ENCODE measurements at regions of chr6 and their contacts with region 1.

Region 1: GRCh38 chr6:446418-447366 is 55.1 kb downstream of the IRF4 start:
- DNase-seq: peak; percentile 92
- H3K4me3 Mint-ChIP-seq: peak overlapping the region; percentile 63
- H3K27ac Mint-ChIP-seq: peak overlapping the region; percentile 98
- H3K4me1 Mint-ChIP-seq: peaks cover 59% of the 10 kb centered on the region
- H3K27me3 Mint-ChIP-seq: peaks cover 2% of the 10 kb centered on the region

Region 2: DNA sequence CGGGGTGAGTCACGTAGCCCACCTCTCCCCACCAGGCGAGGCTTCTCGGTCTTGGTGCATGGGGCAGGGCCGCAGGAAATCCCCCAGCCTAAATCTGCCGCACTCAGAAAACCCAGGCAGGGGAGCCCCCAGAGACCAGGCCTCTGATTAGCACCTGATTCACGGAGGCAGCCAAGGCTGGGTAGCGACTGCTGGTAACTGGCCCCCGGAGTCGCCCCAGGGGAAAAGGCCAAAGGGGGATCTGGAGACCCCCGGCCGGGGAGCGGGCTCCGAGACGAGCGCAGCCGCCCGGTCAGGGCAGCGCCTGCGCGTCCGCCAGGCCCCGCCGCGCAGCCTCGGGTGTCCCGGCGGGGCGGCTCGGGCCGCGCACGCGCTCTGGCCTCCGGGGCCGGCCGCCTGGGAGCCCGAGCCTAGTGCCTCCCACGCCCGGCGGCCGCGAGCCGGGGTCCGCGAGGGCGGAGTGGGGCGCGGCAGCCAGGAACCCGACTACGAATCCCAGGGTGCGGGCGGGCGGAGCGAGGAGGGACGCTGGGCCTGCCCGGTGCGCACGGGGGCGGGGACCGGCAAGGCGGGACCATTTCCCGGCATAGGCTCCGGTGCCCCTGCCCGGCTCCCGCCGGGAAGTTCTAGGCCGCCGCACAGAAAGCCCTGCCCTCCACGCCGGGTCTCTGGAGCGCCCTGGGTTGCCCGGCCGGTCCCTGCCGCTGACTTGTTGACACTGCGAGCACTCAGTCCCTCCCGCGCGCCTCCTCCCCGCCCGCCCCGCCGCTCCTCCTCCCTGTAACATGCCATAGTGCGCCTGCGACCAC is 154.8 kb before region 1 on chr6 and contains the start of gene DUSP22:
- intact Hi-C with region 1: loop called (anchors 2 kb)
- DNase-seq: peak; percentile 79
- H3K4me3 Mint-ChIP-seq: peak within 1 kb of the TSS; percentile 94
- H3K27ac Mint-ChIP-seq: peak within 1 kb of the TSS; percentile 99
- H3K4me1 Mint-ChIP-seq: peaks cover 39% of the 10 kb centered on the region
- H3K27me3 Mint-ChIP-seq: no peaks in the 10 kb centered on the region
- total RNA-seq, gene DUSP22: 22.0 and 22.1 TPM in 2 replicates

Region 3: GRCh38 chr6:399785-400534 is 46.7 kb before region 1 on chr6:
- intact Hi-C with region 1: loop called (anchors 1 kb)
- DNase-seq: peak; percentile 40
- H3K4me3 Mint-ChIP-seq: peak overlapping the region; percentile 79
- H3K27ac Mint-ChIP-seq: peak overlapping the region; percentile 56
- H3K4me1 Mint-ChIP-seq: peaks cover 93% of the 10 kb centered on the region
- H3K27me3 Mint-ChIP-seq: no peaks in the 10 kb centered on the region

Region 4: GRCh38 chr6:431986-432385 is 14.7 kb before region 1 on chr6:
- intact Hi-C with region 1: loop called (anchors 1 kb)
- DNase-seq: peak; percentile 70
- H3K4me3 Mint-ChIP-seq: peak overlapping the region; percentile 61
- H3K27ac Mint-ChIP-seq: peak overlapping the region; percentile 60
- H3K4me1 Mint-ChIP-seq: peaks cover 85% of the 10 kb centered on the region
- H3K27me3 Mint-ChIP-seq: no peaks in the 10 kb centered on the region

Region 5: DNA sequence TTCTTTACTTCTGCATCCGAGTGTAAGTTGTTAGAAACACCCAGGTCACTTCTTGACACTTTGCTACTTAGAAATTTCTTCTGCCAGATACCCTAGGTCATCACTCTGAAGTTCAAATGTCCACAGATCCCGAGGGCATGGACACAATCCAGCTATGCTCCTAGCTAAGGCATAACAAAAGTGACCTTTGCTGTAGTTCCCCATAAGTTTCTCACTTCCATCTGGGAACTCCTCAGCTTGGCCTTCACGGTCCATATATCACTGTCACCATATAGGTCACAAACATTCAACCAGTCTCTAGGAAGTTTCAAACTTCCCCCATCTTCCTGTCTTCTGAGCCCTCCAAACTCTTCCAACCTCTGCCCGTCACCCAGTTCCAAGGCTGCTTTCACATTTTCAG is 10.2 kb after region 1 on chr6:
- intact Hi-C with region 1: no loop called
- DNase-seq: no peak
- H3K4me3 Mint-ChIP-seq: no peak overlapping the region
- H3K27ac Mint-ChIP-seq: no peak overlapping the region
- H3K4me1 Mint-ChIP-seq: peaks cover 35% of the 10 kb centered on the region
- H3K27me3 Mint-ChIP-seq: no peaks in the 10 kb centered on the region

Region 6: GRCh38 chr6:484086-484745 is 37.5 kb after region 1 on chr6:
- intact Hi-C with region 1: loop called (anchors 1 kb)
- DNase-seq: no peak
- H3K4me3 Mint-ChIP-seq: peak overlapping the region; percentile 38
- H3K27ac Mint-ChIP-seq: peak overlapping the region; percentile 85
- H3K4me1 Mint-ChIP-seq: peaks cover 65% of the 10 kb centered on the region
- H3K27me3 Mint-ChIP-seq: no peaks in the 10 kb centered on the region

Region 7: GRCh38 chr6:506508-506907 is 59.8 kb after region 1 on chr6:
- intact Hi-C with region 1: loop called (anchors 1 kb)
- DNase-seq: no peak
- H3K4me3 Mint-ChIP-seq: peak overlapping the region; percentile 64
- H3K27ac Mint-ChIP-seq: peak overlapping the region; percentile 96
- H3K4me1 Mint-ChIP-seq: peaks cover 100% of the 10 kb centered on the region
- H3K27me3 Mint-ChIP-seq: no peaks in the 10 kb centered on the region

Region 8: DNA sequence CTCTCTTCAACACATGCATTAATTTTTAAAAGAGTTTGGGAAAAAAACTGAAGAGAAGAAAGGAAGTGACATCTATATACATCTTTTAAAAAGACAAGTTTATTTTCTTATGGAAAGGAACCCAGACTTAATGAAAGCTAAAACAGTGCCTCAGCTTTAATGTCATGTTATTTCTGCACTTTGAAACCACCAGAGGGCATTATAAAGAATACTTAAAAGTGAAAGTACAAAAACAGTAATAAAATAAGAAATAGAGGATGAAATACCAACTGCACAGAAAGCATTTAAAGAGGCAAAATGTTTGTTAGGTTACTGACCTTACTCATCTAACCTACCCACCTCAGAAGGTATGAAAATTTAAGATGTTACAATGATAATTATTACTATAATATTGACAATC is 111.4 kb after region 1 on chr6:
- intact Hi-C with region 1: loop called (anchors 1 kb)
- DNase-seq: no peak
- H3K4me3 Mint-ChIP-seq: no peak overlapping the region
- H3K27ac Mint-ChIP-seq: peak overlapping the region; percentile 55
- H3K4me1 Mint-ChIP-seq: peaks cover 50% of the 10 kb centered on the region
- H3K27me3 Mint-ChIP-seq: no peaks in the 10 kb centered on the region

Region 9: DNA sequence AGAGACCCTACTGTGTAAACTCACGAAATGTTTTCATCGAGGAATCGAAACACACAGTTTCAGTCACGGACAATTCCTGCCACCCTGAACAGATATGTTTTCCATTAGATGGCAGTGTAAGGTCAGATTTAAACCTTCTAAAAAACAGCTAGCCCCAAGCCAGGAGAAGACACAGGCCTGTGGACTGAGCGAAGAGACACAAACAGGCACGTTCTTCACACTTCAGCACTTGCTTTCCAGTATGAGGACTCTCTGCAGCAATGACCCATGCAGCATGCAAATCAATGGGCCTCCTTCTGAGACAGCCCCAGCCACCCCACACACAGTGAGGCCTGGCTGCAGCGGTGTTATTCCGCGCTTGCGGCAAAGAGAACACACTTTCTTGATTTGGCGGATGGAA is 178.3 kb after region 1 on chr6:
- intact Hi-C with region 1: no loop called
- DNase-seq: no peak
- H3K4me3 Mint-ChIP-seq: no peak overlapping the region
- H3K27ac Mint-ChIP-seq: no peak overlapping the region
- H3K4me1 Mint-ChIP-seq: peaks cover 22% of the 10 kb centered on the region
- H3K27me3 Mint-ChIP-seq: no peaks in the 10 kb centered on the region